Right ventricle myocardium superior (tissue), 1 donor: ENCODE measurements at regions of chr16 and their contacts with region 1.

Region 1: GRCh38 chr16:85717393-85718121 is 28.8 kb upstream of the GINS2 start:
- DNase-seq: peak; percentile 78
- ATAC-seq: peak; percentile 82

Region 2: DNA sequence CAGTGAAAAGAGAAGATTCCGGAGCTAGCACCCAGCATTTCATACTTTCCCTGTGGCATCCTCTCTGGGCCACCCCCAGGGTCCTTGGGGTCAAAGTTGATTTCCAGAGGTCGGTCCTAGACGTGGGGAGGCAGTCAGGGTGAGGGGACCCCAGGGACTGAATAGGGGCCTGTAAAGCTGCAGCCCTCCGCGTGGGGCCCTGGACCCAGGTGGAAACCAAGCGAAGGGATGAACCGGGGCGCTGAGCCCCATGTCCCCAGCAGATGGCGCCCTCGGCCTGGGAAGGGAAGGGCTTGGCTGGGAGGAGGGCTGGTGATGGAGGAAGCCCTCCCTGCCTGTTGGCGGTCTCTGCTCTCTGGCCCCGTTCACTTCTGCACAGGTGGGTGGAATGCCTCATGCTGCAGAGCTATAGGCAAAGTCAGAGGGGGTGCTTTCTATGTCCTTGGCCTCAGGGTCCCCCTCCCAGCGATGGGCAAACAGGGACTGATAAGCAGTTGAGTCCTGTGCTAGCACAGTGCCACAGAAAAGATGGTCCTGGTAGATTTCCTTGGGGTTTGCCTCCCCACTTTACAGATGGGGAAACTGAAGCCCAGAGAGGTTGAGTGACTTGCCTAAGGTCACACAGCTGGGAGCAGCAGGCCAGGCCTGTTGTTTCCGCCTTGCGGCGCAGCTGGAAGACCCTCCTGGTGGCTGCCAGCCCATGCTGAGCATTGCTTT is 441.9 kb before region 1 on chr16:
- intact Hi-C with region 1: loop called (anchors 10 kb)
- DNase-seq: peak; percentile 75
- ATAC-seq: peak; percentile 80

Region 3: DNA sequence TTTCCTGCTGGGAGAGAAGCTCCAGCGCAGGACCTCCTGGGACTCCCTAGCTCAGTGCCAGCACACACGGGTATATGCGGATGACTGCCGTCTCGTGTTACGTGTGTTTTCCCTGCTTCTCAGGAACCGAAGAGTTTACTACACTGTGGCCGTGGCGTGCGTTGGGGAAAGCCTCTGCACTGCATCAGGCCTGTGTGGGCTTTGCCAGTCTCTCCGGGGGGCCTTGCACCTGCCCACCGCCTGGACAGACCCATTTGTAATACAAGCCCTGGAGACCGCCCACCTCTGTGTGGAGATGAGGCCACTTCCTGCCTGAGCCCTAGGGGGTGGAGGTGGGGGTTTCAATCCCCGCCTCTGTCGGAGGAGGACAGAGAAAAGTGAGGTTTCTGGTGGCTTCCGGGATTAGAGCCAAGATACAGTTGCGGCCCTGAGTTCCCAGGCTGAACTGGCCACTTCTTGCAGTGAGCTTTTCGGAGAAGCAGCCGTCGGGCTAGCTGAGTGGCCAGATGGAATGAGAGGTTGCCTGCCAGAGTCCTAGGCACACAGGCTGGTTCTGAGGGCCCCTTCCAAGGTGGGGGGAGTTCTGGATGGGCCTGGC is 147.8 kb before region 1 on chr16:
- intact Hi-C with region 1: no loop called
- DNase-seq: peak; percentile 50
- ATAC-seq: no peak

Region 4: DNA sequence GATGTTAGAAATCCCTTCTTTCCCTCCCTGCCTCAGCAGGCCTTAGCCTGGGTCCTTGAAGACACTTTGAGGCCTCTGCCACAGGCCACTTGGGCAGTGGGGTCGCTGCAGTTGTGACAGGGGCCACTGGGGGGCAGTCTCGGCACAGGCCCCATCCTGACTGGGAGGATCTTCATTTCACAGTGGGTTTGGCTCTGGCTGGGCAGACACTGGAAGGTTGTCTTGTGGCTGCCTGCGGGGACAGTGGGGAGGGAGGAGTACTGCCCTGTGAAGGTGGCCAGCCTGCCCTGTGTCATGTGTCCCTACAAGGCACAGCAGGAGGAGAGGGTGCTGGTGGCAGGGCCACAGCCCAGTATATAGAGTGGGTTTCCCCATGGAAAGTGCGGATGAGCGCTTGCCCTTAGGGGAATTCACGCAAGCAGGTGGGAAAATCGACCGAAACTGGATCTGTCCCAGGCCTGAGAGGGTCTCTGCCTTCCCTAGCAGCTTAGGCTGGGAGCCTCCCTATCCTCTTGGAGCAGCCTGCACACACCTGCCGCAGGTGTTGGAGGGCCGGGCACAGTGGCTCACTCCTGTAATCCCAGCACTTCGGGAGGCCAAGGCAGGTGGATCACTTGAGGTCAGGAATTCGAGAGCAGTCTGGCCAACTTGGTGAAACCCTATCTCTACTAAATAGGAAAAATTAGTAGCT is 57.6 kb before region 1 on chr16:
- intact Hi-C with region 1: loop called (anchors 10 kb)
- DNase-seq: peak; percentile 81
- ATAC-seq: peak; percentile 92